GM12878 (cell line): ENCODE measurements at regions of chr4 and their contacts with region 1.

Region 1: DNA sequence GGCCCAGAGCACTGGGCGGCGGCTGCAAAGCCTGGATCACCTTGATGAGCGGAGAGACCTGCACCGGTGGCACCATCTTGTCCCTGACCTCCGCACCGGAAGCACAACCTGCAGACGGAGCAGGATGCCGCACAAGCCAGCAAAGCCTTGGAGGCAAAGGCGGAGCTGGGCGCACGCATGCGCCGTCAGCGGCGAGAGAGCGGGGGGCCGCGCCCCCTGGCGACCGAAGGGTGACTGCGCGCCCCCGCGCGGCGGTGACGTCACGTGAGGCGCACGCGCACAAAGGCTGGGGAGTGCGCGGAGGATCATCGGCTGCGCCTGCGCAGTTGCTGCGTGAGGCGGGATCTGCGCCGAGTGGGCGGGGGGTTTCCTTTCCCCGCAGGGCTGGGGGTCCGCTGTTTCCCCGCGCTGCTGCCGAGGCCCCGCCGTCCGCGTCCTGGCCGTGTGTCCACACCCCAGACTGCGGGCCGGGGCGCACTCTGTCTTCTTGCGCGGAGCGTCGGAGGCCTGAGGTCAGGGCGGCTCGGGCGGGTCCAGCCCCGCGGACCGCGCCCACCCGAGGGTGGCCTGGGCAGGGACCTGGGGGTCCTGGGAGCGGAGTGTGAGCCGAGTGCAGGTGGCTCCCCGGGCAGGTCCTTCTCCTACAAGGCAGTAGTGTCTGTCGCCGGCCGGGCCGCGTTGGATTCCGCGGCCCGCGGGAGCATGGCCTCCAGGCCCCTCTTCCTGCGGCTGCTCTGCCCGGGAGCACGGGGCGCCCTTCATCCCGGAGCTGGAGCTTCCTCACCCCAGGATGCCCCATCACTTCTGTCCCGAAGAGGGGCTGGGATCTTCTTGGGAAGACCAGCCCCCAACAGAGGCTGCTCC is at the starts of genes ATP5ME and MYL5:
- DNase-seq: peak; percentile 93
- ATAC-seq: peak; percentile 89
- H3K4me3 ChIP-seq: peak within 1 kb of the TSS; percentile 89
- H3K27ac ChIP-seq: peak within 1 kb of the TSS; percentile 92
- H3K4me1 ChIP-seq: peaks cover 27% of the 10 kb centered on the region
- H3K27me3 ChIP-seq: no peaks in the 10 kb centered on the region
- CTCF ChIP-seq: peak; percentile 88 to 99 (median 99); a peak in 4 of 6 replicates
- EP300 ChIP-seq: no peak
- POLR2A ChIP-seq: no peak
- RAD21 ChIP-seq: peak; percentile 48; the same call in 1 of the 2 replicates
- polyA plus RNA-seq, gene ATP5ME: 1,956 to 2,374 TPM
- polyA plus RNA-seq, gene MYL5: 1.2 to 3.9 TPM

Region 2: GRCh38 chr4:242121-242848 is 432.1 kb before region 1 on chr4:
- CTCF ChIA-PET with region 1: interaction called, 3 read pairs
- POLR2A ChIA-PET with region 1: no interaction called
- RAD21 ChIA-PET with region 1: no interaction called
- SMC1A ChIA-PET with region 1: interaction called, 4 read pairs
- in situ Hi-C with region 1: no loop called
- intact Hi-C with region 1: loop called (anchors 10 kb)
- DNase-seq: peak; percentile 34
- ATAC-seq: peak; percentile 90
- H3K4me3 ChIP-seq: peak overlapping the region; percentile 41; the same call in 1 of the 2 replicates
- H3K27ac ChIP-seq: no peak overlapping the region
- H3K4me1 ChIP-seq: no peaks in the 10 kb centered on the region
- H3K27me3 ChIP-seq: no peaks in the 10 kb centered on the region
- CTCF ChIP-seq: peak; percentile 55 to 76 (median 69); a peak in 5 of 6 replicates
- EP300 ChIP-seq: no peak
- POLR2A ChIP-seq: no peak
- RAD21 ChIP-seq: peak; percentile 80

Region 3: GRCh38 chr4:271492-272103 is 402.8 kb before region 1 on chr4:
- CTCF ChIA-PET with region 1: no interaction called
- POLR2A ChIA-PET with region 1: no interaction called
- RAD21 ChIA-PET with region 1: no interaction called
- SMC1A ChIA-PET with region 1: no interaction called
- in situ Hi-C with region 1: no loop called
- intact Hi-C with region 1: no loop called
- DNase-seq: no peak
- ATAC-seq: no peak
- H3K4me3 ChIP-seq: no peak overlapping the region
- H3K27ac ChIP-seq: no peak overlapping the region
- H3K4me1 ChIP-seq: no peaks in the 10 kb centered on the region
- H3K27me3 ChIP-seq: no peaks in the 10 kb centered on the region
- CTCF ChIP-seq: no peak
- EP300 ChIP-seq: no peak
- POLR2A ChIP-seq: no peak
- RAD21 ChIP-seq: no peak

Region 4: DNA sequence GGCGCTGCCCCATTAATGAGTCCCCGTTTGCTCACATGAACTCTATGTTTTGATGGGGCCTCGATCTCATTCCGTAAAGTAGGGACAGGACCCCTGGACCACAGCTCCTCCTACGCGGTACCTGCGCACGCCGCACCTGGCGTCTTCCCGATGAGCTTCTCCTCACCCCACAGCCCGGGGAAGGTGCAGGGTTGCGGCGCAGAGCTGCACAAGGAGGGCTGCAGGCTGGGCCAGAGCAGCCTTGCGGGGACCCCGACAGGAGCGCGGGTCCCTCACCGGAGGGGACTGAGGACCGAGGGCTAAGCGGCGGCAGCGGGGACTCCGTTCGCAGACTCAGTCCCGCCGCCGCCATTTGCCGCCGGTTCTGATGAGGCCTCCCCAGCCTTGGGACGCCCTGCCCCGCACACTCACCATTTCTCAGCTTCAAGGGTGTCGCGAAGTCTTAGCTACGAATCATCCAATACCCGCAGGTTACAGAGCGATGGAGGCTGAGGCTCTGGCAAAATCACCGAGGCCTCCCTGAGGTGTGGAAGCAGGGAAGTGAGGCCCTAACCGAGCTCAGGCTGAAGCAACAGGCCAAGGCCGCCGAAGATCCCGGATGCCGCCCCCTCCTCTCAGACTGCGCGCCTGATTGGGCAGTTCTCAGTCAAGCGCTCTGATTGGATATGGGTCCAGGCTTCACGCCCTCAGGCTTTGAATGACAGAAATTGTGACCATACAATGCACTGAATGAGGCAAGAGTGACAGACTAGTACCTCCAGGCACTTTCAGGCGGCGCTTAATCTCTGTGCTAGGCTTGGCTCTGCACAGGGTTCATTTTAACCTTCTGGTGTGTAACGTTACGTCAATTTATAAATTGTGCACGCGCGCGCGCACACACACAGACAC is 200.6 kb before region 1 on chr4:
- CTCF ChIA-PET with region 1: interaction called, 4 read pairs
- POLR2A ChIA-PET with region 1: no interaction called
- RAD21 ChIA-PET with region 1: no interaction called
- SMC1A ChIA-PET with region 1: no interaction called
- in situ Hi-C with region 1: no loop called
- intact Hi-C with region 1: loop called (anchors 10 kb)
- DNase-seq: peak; percentile 99
- ATAC-seq: peak; percentile 99
- H3K4me3 ChIP-seq: peak overlapping the region; percentile 92
- H3K27ac ChIP-seq: peak overlapping the region; percentile 95
- H3K4me1 ChIP-seq: no peaks in the 10 kb centered on the region
- H3K27me3 ChIP-seq: no peaks in the 10 kb centered on the region
- CTCF ChIP-seq: no peak
- EP300 ChIP-seq: no peak
- POLR2A ChIP-seq: peak; percentile 97
- RAD21 ChIP-seq: no peak

Region 5: DNA sequence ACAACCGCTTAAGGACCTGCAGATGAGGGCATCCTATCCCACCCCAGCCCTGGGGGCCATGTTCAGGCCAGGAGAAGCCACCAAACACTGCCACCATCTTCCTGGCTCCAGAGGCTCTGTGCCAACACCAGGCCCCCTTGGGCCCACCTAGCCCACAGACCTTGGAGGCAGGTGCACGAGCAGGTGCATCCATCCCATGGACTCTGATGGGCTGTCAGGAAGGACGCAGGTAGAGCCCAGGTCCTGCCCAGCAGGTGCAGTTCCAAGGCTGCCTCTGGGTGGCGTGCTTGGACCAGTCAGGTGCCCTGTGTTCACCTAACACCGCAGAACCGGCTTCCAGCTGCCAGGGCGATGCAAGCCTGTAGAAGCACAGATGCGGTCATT is 71.9 kb before region 1 on chr4:
- CTCF ChIA-PET with region 1: interaction called, 6 read pairs
- POLR2A ChIA-PET with region 1: interaction called, 7 read pairs
- RAD21 ChIA-PET with region 1: interaction called, 7 read pairs
- SMC1A ChIA-PET with region 1: interaction called, 10 read pairs
- in situ Hi-C with region 1: no loop called
- intact Hi-C with region 1: no loop called
- DNase-seq: no peak
- ATAC-seq: peak; percentile 72
- H3K4me3 ChIP-seq: no peak overlapping the region
- H3K27ac ChIP-seq: no peak overlapping the region
- H3K4me1 ChIP-seq: no peaks in the 10 kb centered on the region
- H3K27me3 ChIP-seq: no peaks in the 10 kb centered on the region
- CTCF ChIP-seq: peak; percentile 55 to 62 (median 58); a peak in 4 of 6 replicates
- EP300 ChIP-seq: no peak
- POLR2A ChIP-seq: no peak
- RAD21 ChIP-seq: peak; percentile 59

Region 6: DNA sequence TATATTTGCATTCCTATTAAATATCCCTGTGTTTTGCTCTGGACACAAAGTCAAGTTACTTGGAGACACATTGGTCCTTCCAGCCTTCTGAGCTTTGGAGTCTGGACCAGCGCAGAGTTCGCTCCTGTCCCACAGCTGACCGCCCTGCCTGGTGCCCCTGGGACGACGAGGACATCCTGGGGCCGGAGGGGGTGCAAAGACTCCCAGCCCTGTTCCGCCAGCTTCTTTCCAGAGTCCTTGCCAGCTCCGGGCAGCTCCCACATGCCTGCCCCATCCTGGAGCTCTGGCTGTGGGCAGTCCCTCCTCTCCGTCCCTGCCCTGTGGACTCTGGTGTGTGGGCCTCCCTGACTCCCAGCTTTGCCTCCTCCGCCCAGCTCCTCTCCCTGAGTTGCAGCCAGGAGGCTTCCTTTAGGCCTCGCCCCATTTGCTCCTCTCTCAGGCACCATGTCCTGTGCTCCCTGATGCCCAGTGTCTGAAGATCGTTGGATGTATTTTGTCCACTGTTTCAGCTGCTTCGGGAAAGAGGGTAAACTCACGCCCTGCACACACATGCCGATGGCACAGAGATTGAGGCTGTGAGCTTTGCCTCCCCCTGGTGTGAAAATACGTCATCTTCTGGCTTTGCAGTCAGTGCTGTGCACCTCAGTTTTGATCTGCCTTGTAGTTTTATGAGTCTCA is 26.3 kb after region 1 on chr4:
- CTCF ChIA-PET with region 1: interaction called, 7 read pairs
- POLR2A ChIA-PET with region 1: interaction called, 14 read pairs
- RAD21 ChIA-PET with region 1: interaction called, 5 read pairs
- SMC1A ChIA-PET with region 1: interaction called, 3 read pairs
- in situ Hi-C with region 1: no loop called
- intact Hi-C with region 1: loop called (anchors 2 kb)
- DNase-seq: no peak
- ATAC-seq: no peak
- H3K4me3 ChIP-seq: no peak overlapping the region
- H3K27ac ChIP-seq: no peak overlapping the region
- H3K4me1 ChIP-seq: peaks cover 8% of the 10 kb centered on the region; the same call in 1 of the 2 replicates
- H3K27me3 ChIP-seq: no peaks in the 10 kb centered on the region
- CTCF ChIP-seq: peak in 1 of 3 experiments; percentile 17; a peak in 1 of 6 replicates
- EP300 ChIP-seq: no peak
- POLR2A ChIP-seq: no peak
- RAD21 ChIP-seq: no peak

Region 7: GRCh38 chr4:931960-932712 is 257.7 kb after region 1 on chr4 and contains the starts of genes GAK and TMEM175:
- CTCF ChIA-PET with region 1: no interaction called
- POLR2A ChIA-PET with region 1: no interaction called
- RAD21 ChIA-PET with region 1: no interaction called
- SMC1A ChIA-PET with region 1: no interaction called
- in situ Hi-C with region 1: no loop called
- intact Hi-C with region 1: loop called (anchors 10 kb)
- DNase-seq: peak; percentile 87
- ATAC-seq: peak; percentile 89
- H3K4me3 ChIP-seq: peak within 1 kb of the TSS; percentile 98
- H3K27ac ChIP-seq: peak within 1 kb of the TSS; percentile 90
- H3K4me1 ChIP-seq: peaks cover 27% of the 10 kb centered on the region
- H3K27me3 ChIP-seq: no peaks in the 10 kb centered on the region
- CTCF ChIP-seq: no peak
- EP300 ChIP-seq: no peak
- POLR2A ChIP-seq: peak; percentile 98
- RAD21 ChIP-seq: no peak
- polyA plus RNA-seq, gene GAK: 0.82 to 5.7 TPM
- polyA plus RNA-seq, gene TMEM175: 0.11 to 0.22 TPM